ENCODE measurements at regions of chr17 and their contacts with region 1.

Region 1: DNA sequence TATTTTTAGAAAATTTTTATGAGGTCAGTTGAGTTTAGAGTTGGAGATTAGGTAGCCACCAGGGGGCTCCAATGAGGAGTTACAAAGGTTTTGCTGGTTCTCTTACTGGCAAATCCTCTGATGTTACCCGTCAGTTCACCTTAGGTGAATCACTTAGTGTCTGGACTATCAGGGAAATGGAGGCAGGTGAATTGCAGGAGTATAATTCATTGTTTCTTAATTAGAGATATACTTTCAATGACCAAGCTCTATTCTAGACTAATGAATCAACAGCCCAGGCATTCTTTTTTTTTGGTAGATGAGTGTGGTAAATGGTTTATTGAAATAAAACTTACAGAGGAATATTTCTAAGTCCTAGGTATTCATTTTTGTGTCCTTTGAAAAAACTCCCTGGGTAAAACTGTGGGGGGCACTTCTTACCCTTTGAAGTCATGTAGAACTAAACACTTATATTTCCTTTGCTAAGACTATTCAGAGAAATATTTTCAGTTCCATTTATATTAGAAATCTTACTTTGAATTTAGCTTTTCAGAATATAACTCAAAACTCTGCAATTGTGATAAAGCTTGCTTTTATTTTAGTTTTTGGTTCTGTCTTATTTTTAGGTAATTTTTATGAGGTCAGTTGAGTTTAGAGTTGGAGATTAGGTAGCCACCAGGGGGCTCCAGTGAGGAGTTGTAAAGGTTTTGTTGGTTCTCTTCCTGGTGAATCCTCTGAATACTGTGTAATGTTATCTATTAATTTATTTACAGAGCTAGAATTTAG is 17.7 kb downstream of the PSMD11 start:
- DNase-seq: peak; percentile 62
- ATAC-seq: peak; percentile 45
- H3K4me3 ChIP-seq: no peak overlapping the region
- H3K27ac ChIP-seq: no peak overlapping the region
- H3K4me1 ChIP-seq: no peaks in the 10 kb centered on the region
- H3K27me3 ChIP-seq: no peaks in the 10 kb centered on the region
- CTCF ChIP-seq: peak; percentile 62

Region 2: DNA sequence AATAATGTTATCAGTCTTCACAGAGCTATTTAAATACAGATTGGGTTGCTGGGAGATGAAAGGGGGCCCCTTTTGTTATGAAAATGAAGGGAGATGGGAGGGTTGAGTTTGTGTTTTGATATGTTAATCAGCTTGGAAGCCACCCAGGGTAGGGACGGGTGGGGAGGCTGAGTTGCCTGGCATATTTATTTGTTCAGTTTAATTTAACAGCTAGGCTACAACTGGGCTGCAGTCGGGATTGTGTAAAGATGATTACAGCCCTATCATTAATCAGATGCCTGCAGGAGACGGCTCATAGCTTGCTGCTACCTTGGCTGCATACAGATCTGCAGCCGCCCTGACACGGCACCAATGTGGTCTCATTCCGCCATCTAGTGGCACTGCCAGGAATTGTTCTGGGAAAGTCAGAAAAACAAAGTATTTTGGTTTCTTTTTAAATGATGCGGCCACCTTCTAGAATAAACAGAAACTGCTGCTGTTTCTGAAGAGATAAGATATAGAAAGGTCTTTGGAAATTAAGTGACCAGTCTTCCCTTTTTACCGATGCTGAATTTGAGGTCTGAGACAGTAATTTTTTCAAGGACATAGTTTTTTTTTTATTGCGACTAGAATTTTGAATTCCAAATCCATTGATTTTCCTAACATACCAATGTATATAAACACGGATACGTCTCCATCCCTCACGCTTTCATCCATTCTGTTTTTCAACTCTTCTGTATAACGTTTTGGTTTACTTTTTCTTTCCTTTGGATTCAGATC is 1289.1 kb after region 1 on chr17:
- CTCF ChIA-PET with region 1: no interaction called
- POLR2A ChIA-PET with region 1: no interaction called
- intact Hi-C with region 1: loop called (anchors 10 kb)
- DNase-seq: peak; percentile 66
- ATAC-seq: peak; percentile 77
- H3K4me3 ChIP-seq: peak overlapping the region; percentile 61
- H3K27ac ChIP-seq: no peak overlapping the region
- H3K4me1 ChIP-seq: peaks cover 4% of the 10 kb centered on the region; the same call in 1 of the 2 replicates
- H3K27me3 ChIP-seq: no peaks in the 10 kb centered on the region
- CTCF ChIP-seq: peak; percentile 76

Measured in PC-3 (cell line).